ENCODE measurements at regions of chrX and their contacts with region 1.

Region 1: DNA sequence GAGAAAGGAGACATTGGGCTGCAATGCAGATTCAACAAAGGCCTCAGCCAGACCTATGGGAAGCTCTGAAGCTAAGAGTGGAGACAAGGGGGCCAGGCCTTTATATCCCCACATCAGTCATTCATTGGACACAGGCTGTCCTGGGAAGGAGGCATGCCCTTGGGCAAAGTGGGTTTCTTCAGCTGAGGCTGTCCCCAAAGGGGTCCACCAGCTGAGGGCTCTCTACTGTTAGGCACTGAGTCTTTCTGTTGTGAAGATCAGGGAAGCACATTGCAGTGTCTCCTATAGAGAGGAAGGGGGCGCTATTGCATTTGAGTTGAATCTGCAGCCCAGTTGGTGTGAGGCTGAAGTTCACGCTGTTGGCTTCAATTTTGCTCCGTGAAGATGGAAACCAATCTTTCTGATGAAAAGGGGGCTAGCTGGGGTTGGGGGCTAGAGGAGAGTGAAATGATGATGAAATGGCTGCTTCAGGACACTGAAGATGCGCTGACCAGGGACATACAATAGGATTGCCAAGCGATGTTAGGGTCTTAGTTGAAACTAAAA is 48.0 kb downstream of the SLC25A5 start:
- DNase-seq: no peak
- H3K4me3 ChIP-seq: no peak overlapping the region
- H3K27me3 ChIP-seq: no peaks in the 10 kb centered on the region
- CTCF ChIP-seq: peak; percentile 69

Region 2: DNA sequence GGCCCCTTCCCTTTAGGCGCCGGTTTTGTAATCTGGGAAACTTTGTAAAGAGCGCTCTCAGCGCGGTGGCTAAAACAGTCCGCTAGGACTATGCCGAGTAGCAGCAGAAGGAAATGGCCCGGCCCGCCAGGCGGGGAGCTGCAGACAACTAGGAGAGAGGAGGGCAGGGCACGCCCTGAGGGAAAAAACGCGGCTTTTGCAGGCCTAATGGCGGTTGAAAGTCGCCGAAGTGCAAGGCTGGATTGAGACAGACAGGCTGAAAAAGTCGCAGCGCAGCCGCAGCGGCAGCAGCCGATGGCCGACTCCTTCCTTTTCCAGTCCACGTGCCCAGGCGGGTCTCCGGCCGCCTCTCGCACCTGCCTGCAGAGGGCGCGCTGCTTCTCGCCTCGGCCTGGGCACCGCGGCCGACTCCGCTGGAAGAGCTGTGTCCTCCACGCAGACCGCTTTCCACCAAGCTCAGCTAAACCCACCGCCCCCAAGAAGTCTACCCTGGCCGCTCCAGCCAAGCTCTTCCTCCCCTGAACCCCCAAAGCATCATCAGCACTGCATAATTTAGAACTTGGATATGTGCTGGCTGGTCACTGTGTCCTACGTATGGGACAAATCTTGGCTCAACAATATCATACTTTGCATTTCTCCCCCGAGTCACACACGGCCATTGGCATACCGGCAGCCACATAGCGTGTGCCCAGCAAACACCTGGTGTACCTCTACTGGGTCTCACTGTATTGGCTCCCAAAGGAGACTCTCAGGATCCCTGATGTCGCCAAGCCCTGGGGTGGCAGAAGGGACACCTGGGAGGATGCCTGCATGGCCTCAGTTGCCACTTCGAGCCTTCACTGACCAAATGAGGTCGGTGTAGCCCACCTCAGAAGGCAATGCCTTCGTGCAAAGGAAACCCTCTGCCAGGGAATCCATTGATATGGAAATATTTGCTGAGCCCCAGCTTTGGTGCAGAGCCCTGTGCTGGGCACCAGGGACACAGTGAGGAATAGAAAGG is 33.4 kb before region 1 on chrX:
- CTCF ChIA-PET with region 1: interaction called, 62 read pairs
- POLR2A ChIA-PET with region 1: interaction called, 4 read pairs
- DNase-seq: no peak
- H3K4me3 ChIP-seq: peak overlapping the region; percentile 22
- H3K27me3 ChIP-seq: no peaks in the 10 kb centered on the region
- CTCF ChIP-seq: peak; percentile 70

Region 3: GRCh38 chrX:119488749-119489148 is 27.5 kb before region 1 on chrX:
- CTCF ChIA-PET with region 1: interaction called, 62 read pairs
- POLR2A ChIA-PET with region 1: interaction called, 4 read pairs
- DNase-seq: no peak
- H3K4me3 ChIP-seq: no peak overlapping the region
- H3K27me3 ChIP-seq: no peaks in the 10 kb centered on the region
- CTCF ChIP-seq: peak; percentile 59

Region 4: DNA sequence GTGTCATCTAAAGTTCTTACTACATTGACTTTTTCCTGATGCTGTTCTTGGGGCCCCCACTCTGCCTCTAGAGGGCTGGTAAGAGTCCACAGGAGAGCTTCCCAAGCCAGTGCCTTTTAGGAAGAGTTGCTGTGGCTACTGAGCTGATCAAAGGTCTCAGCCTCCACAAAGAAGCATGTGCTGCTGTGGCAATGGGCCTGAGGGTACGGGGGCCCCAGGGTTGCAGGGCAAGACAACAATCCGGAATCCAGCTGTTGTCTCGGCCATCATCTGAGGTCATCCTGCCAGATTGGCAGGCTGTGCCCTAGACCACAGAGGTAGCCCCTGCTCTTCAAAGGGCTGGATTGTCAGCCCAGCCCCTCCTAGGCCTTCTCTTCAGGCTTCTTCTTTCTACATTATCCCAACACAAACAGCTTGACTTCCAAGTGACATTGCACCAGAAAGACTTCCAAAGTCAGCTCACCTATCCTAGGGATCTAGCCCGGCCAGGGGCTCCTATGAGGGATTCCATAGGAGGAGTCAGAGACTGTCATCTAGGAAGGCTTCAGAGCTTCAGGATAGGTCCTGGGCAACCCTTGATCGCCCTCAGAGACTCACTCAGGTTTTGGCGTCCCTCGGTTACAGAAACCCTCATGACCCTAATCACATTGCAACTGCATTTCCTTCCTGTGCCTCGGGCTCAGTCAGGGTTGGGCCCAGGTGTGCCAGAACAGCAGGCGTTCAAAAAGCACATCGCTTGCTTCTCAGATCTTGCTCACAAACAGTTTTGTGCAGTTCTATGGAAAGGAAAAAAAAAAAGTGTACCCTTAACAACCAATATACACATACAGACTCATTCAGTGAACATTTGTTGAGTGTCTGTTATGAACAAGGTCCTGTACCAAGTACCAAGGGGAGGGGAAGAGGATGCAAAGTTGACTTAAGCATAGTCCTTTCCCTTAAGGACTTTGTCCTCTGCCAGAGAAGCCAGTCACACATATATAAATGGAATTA is 20.2 kb before region 1 on chrX:
- CTCF ChIA-PET with region 1: interaction called, 62 read pairs
- POLR2A ChIA-PET with region 1: no interaction called
- DNase-seq: no peak
- H3K4me3 ChIP-seq: no peak overlapping the region
- H3K27me3 ChIP-seq: no peaks in the 10 kb centered on the region
- CTCF ChIP-seq: no peak

Region 5: GRCh38 chrX:119529345-119530276 is 13.4 kb after region 1 on chrX:
- CTCF ChIA-PET with region 1: no interaction called
- POLR2A ChIA-PET with region 1: no interaction called
- DNase-seq: no peak
- H3K4me3 ChIP-seq: no peak overlapping the region
- H3K27me3 ChIP-seq: no peaks in the 10 kb centered on the region
- CTCF ChIP-seq: no peak

Region 6: DNA sequence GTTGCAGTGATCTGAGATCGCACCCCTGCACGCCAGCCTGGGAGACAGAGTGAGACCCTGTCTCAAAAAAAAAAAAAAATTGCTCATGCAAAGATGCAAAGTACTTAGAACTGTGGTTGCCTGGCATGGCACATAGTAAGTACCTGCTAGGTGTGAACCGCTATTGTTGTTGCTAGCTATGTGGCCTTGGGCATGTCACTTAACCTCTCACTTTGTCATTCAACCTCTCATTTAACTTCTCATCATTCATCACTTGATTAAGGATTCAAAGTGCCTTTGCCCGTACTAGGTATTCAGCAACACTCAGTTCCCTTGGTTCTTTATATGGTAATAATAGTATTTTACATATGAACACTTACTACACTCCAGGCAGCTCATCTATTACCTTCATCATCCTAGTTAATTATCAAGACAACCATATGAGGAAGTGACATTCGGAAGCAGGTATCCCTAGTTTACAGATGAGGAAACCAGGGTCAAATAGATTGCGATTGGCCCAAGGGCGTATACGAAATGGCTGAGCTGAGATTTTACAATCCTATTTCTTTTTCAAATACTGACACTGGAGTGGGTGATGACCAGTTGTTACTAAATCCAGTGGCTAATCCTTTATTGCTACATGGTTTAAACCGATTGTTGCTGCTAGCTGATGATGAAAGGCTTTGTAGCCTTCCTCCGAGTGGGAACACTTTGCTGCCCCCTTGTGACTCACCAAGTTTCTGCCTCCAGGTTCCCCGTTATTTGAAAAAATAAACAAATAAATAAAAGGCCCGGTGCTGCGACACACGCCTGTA is 213.4 kb after region 1 on chrX:
- CTCF ChIA-PET with region 1: interaction called, 14 read pairs
- POLR2A ChIA-PET with region 1: no interaction called
- DNase-seq: no peak
- H3K4me3 ChIP-seq: no peak overlapping the region
- H3K27me3 ChIP-seq: no peaks in the 10 kb centered on the region
- CTCF ChIP-seq: peak; percentile 60